Caco-2 (cell line): ENCODE measurements at regions of chr2 and their contacts with region 1.

Region 1: DNA sequence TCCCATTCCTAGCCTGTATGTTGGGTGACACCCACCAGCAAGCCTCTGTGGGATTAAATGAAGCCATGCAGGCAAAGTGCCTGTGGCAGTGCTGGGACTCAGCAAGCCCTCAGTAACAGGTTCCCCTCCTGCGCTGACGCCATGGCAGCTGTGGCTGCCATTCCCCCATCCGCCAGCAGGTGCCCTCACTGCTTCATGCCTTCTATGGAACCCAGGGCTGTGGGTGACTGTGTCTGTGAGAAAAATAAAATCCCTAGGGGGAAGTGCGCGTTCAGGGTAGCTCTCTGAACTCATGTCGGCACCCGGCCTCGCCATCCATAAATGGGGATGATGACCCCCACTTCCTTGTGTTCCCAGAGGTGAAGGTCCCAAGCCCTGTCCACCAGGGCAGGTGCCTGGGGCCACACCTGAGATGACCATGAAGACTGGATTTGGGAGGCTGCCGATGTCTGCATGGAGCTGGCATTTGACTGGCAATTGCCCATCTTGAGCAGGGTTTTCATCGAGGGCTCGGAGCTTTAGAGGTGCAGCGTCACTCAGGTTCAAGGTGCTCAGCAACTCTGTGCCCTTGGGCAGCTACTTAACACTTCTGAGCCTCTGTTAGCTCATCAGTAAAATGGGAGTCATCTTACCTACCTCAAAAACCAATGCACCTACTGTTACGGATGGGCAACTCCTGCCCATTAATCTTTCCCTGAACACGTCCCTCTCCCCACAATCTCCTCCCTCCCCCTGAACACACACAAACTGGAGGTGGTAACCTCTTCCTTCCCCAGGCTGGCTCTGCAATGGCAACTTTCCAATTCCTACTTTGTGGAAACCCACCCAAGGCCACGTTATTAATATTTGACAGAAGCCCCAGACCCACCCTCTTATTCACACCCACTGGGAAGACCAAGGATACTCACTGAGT is 2.9 kb upstream of the MAL start:
- DNase-seq: peak; percentile 69 to 81
- H3K4me3 ChIP-seq: no peak overlapping the region
- H3K4me3 Mint-ChIP-seq: no peak overlapping the region
- H3K27ac Mint-ChIP-seq: no peak overlapping the region
- H3K4me1 ChIP-seq: no peaks in the 10 kb centered on the region
- H3K4me1 Mint-ChIP-seq: no peaks in the 10 kb centered on the region
- H3K27me3 ChIP-seq: no peaks in the 10 kb centered on the region
- H3K27me3 Mint-ChIP-seq: peaks cover 13% of the 10 kb centered on the region
- CTCF ChIP-seq: peak; percentile 82 to 89

Region 2: DNA sequence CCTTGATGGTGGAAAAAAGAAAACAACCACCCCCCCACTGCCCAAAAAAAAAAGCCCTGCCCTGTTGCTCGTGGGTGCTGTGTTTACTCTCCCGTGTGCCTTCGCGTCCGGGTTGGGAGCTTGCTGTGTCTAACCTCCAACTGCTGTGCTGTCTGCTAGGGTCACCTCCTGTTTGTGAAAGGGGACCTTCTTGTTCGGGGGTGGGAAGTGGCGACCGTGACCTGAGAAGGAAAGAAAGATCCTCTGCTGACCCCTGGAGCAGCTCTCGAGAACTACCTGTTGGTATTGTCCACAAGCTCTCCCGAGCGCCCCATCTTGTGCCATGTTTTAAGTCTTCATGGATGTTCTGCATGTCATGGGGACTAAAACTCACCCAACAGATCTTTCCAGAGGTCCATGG is 31.0 kb after region 1 on chr2:
- CTCF ChIA-PET with region 1: interaction called, 23 read pairs
- POLR2A ChIA-PET with region 1: no interaction called
- intact Hi-C with region 1: loop called (anchors 1 kb)
- DNase-seq: peak; percentile 23 to 37
- H3K4me3 ChIP-seq: no peak overlapping the region
- H3K4me3 Mint-ChIP-seq: no peak overlapping the region
- H3K27ac Mint-ChIP-seq: no peak overlapping the region
- H3K4me1 ChIP-seq: no peaks in the 10 kb centered on the region
- H3K4me1 Mint-ChIP-seq: no peaks in the 10 kb centered on the region
- H3K27me3 ChIP-seq: peaks cover 1% of the 10 kb centered on the region; the same call in 1 of the 2 replicates
- H3K27me3 Mint-ChIP-seq: peaks cover 13% of the 10 kb centered on the region
- CTCF ChIP-seq: peak in 1 of 2 experiments; percentile 40

Region 3: GRCh38 chr2:95076784-95077529 is 54.4 kb after region 1 on chr2:
- CTCF ChIA-PET with region 1: interaction called, 13 read pairs
- POLR2A ChIA-PET with region 1: no interaction called
- intact Hi-C with region 1: loop called (anchors 1 kb)
- DNase-seq: peak; percentile 92 to 93
- H3K4me3 ChIP-seq: peak overlapping the region; percentile 55
- H3K4me3 Mint-ChIP-seq: peak overlapping the region; percentile 71
- H3K27ac Mint-ChIP-seq: no peak overlapping the region
- H3K4me1 ChIP-seq: no peaks in the 10 kb centered on the region
- H3K4me1 Mint-ChIP-seq: no peaks in the 10 kb centered on the region
- H3K27me3 ChIP-seq: no peaks in the 10 kb centered on the region
- H3K27me3 Mint-ChIP-seq: no peaks in the 10 kb centered on the region
- CTCF ChIP-seq: peak; percentile 94

Region 4: DNA sequence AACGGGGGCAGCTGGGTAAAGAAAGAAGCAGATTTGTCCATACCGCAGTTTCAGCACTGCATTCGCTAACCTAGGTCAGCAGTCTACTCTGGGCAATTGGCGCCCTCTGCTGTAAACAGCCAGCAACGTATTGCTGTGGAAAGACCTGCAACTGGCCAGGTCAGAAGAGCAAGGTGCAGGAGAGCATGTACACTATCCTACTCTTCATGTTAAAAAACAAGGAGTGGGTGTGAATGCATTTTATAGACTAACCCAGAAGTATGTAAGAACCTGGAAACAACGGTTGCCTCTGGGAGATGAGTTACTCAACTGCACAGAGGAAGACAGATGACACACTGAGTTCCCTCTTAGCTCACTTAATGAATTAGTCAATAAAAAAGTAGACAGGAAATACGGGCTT is 92.9 kb after region 1 on chr2:
- CTCF ChIA-PET with region 1: interaction called, 5 read pairs
- POLR2A ChIA-PET with region 1: no interaction called
- intact Hi-C with region 1: loop called (anchors 1 kb)
- DNase-seq: peak; percentile 79
- H3K4me3 ChIP-seq: no peak overlapping the region
- H3K4me3 Mint-ChIP-seq: no peak overlapping the region
- H3K27ac Mint-ChIP-seq: no peak overlapping the region
- H3K4me1 ChIP-seq: peaks cover 6% of the 10 kb centered on the region; the same call in 1 of the 2 replicates
- H3K4me1 Mint-ChIP-seq: peaks cover 15% of the 10 kb centered on the region
- H3K27me3 ChIP-seq: no peaks in the 10 kb centered on the region
- H3K27me3 Mint-ChIP-seq: no peaks in the 10 kb centered on the region
- CTCF ChIP-seq: peak; percentile 59 to 87

Region 5: GRCh38 chr2:95207111-95207961 is 184.8 kb after region 1 on chr2 and contains the start of gene ZNF892:
- CTCF ChIA-PET with region 1: no interaction called
- POLR2A ChIA-PET with region 1: no interaction called
- intact Hi-C with region 1: loop called (anchors 1 kb)
- DNase-seq: peak; percentile 95 to 96
- H3K4me3 ChIP-seq: peak within 1 kb of the TSS; percentile 61
- H3K4me3 Mint-ChIP-seq: peak within 1 kb of the TSS; percentile 75
- H3K27ac Mint-ChIP-seq: peak within 1 kb of the TSS; percentile 15
- H3K4me1 ChIP-seq: no peaks in the 10 kb centered on the region
- H3K4me1 Mint-ChIP-seq: peaks cover 7% of the 10 kb centered on the region
- H3K27me3 ChIP-seq: no peaks in the 10 kb centered on the region
- H3K27me3 Mint-ChIP-seq: no peaks in the 10 kb centered on the region
- CTCF ChIP-seq: peak; percentile 34 to 62
- total RNA-seq, gene ZNF892: 3.4 and 3.5 TPM in 2 replicates

Region 6: GRCh38 chr2:95314964-95315611 is 292.5 kb after region 1 on chr2:
- CTCF ChIA-PET with region 1: no interaction called
- POLR2A ChIA-PET with region 1: no interaction called
- intact Hi-C with region 1: loop called (anchors 5 kb)
- DNase-seq: peak; percentile 55 to 57
- H3K4me3 ChIP-seq: no peak overlapping the region
- H3K4me3 Mint-ChIP-seq: no peak overlapping the region
- H3K27ac Mint-ChIP-seq: no peak overlapping the region
- H3K4me1 ChIP-seq: no peaks in the 10 kb centered on the region
- H3K4me1 Mint-ChIP-seq: no peaks in the 10 kb centered on the region
- H3K27me3 ChIP-seq: no peaks in the 10 kb centered on the region; the same call in 1 of the 2 replicates
- H3K27me3 Mint-ChIP-seq: peaks cover 4% of the 10 kb centered on the region
- CTCF ChIP-seq: peak; percentile 66 to 80